Right ventricle myocardium inferior (tissue), 1 donor: ENCODE measurements at regions of chr4 and their contacts with region 1.

Region 1: DNA sequence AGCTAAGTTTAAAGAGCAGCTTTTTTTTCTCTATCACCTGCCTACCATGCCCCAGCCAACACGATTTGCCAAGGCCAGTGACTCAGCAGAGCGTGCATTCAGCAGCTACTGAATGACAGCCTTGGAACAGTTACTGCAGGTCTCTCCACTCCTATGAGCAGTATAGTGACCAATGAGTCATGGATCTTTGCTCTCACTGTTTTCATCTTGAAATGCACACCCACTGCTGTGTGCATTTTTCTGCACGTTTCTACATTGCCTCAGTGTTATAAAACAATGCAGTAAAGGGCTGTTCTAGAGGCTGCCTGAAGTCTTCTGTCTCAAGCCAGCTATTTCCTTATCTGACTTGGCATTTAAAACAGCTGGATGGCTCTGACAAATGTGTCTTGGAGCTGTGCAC is 66.0 kb upstream of the C4orf54 start:
- DNase-seq: peak; percentile 63
- ATAC-seq: peak; percentile 93

Region 2: DNA sequence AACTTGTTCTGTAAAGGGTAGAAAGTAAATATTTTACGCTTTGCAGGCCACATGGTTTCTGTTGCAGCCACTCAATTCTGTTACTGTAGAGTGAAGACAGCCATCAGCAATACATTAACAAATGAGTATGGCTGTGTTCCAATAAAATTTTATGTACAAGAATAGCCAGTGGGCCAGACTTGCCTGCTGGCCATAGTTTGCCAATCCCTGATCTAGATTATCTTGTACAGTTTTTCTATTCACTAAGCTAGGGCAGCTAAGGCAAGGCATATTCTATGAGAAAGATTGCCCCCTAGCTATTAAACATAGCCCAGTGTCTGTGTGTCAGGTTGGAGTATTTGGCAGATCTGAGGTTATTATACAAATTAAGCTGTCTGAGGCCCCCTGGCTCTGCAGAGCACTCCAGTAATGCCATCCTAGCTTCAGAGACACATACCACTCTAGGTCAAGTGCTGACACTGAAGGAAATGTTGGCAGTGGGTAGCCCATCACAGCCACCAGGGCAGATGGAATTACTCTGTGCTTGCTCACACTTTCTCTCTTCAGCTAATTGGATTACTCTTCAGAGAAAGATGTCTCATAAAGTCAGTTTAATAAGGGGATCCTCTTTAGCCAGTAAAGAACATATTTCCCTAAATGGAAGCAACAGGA is 108.3 kb before region 1 on chr4:
- intact Hi-C with region 1: loop called (anchors 5 kb)
- DNase-seq: peak; percentile 40
- ATAC-seq: peak; percentile 91

Region 3: GRCh38 chr4:99642725-99643489 is 80.7 kb before region 1 on chr4:
- intact Hi-C with region 1: loop called (anchors 1 kb)
- DNase-seq: peak; percentile 86
- ATAC-seq: peak; percentile 96

Region 4: DNA sequence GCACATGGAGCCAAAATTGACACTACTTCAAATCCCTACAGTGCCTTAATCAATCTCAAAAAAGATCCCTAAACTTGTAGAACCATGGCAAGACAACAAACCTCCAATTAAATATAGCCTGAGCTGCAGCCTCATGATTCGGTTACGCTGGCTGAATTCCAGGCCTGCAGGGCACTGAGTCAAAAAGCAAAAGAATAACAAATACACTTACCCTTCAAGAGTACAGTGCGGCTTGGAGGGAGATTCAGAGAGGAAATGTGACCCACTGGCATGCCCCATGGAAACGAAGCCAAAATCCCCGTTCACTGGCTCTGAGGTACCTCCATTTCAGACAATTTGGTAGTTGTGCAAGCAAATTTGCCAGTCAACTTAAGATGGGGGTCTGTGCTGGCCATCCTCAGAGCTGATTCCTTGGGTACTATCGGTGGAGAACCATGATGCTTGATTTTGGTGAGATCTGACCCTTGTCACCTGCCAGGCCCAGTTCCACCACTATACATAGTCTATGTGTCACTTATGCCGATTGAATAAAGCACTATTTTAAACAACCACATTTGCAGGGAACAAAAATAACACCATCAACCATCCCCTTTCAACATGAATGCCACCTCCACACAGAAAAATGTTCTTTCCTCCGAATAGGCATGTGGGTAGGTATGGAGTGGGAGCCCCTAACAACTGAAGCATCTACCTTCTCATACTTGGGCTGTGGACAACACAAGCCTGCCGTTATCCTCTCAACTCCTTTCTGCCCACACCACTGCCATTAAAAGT is 68.1 kb before region 1 on chr4:
- intact Hi-C with region 1: loop called (anchors 5 kb)
- DNase-seq: peak; percentile 70
- ATAC-seq: peak; percentile 47

Region 5: DNA sequence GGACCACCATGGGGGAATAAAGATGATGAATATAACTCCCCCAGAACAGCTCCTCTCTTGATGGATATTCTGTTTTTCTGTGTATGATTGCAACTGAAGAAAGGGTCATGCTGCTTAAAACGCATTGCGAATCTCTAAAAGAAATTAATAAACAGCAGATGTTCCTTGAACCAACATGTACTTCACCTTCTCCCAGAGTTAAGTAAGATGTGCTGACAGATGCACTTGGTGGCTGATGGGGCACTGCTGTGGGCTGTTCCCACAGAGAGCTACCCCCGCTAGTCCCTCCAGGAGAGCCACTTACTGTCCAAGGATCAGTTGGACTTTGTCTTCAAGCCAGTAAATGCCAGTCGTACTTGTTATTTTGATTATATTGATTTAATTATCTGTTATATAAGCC is 39.7 kb before region 1 on chr4:
- intact Hi-C with region 1: loop called (anchors 5 kb)
- DNase-seq: no peak
- ATAC-seq: peak; percentile 75

Region 6: GRCh38 chr4:99808260-99808857 is 84.7 kb after region 1 on chr4:
- intact Hi-C with region 1: loop called (anchors 2 kb)
- DNase-seq: peak; percentile 83
- ATAC-seq: peak; percentile 77